ENCODE measurements at regions of chr7 and their contacts with region 1.

Region 1: GRCh38 chr7:954330-955238 is at the start of gene ADAP1:
- DNase-seq: peak in 7 of 9 donors; percentile 41 to 76 (median 56)
- ATAC-seq: peak; percentile 84
- H3K4me3 ChIP-seq: no peak within 1 kb of the TSS
- H3K4me3 Mint-ChIP-seq: peak within 1 kb of the TSS; percentile 51 to 86 (median 65)
- H3K27ac ChIP-seq: no peak within 1 kb of the TSS
- H3K27ac Mint-ChIP-seq: peak within 1 kb of the TSS in 2 of 9 donors; percentile 32 to 33
- H3K4me1 ChIP-seq: no peaks in the 10 kb centered on the region
- H3K4me1 Mint-ChIP-seq: peaks cover 0 to 12% (median 0%) of the 10 kb centered on the region in 7 donors
- H3K27me3 ChIP-seq: no peaks in the 10 kb centered on the region
- H3K27me3 Mint-ChIP-seq: peaks cover 0 to 13% (median 8%) of the 10 kb centered on the region in 5 donors
- total RNA-seq, gene ADAP1: 5.0 to 68.6 (median 17.3) TPM

Region 2: GRCh38 chr7:322111-322671 is 632.4 kb before region 1 on chr7:
- CTCF ChIA-PET with region 1: no interaction called
- POLR2A ChIA-PET with region 1: no interaction called
- intact Hi-C with region 1: loop called in 1 of 2 experiments (anchors 5 kb)
- DNase-seq: peak; percentile 74 to 98 (median 85)
- ATAC-seq: peak; percentile 100
- H3K4me3 ChIP-seq: no peak overlapping the region
- H3K4me3 Mint-ChIP-seq: no peak overlapping the region
- H3K27ac ChIP-seq: no peak overlapping the region
- H3K27ac Mint-ChIP-seq: no peak overlapping the region
- H3K4me1 ChIP-seq: no peaks in the 10 kb centered on the region
- H3K4me1 Mint-ChIP-seq: peaks cover 0 to 6% (median 0%) of the 10 kb centered on the region in 7 donors
- H3K27me3 ChIP-seq: no peaks in the 10 kb centered on the region
- H3K27me3 Mint-ChIP-seq: peaks cover 15 to 36% (median 23%) of the 10 kb centered on the region in 5 donors

Region 3: GRCh38 chr7:774161-775109 is 180.1 kb before region 1 on chr7:
- CTCF ChIA-PET with region 1: no interaction called
- POLR2A ChIA-PET with region 1: no interaction called
- intact Hi-C with region 1: loop called in 1 of 2 experiments (anchors 5 kb)
- DNase-seq: peak; percentile 38 to 79 (median 62)
- ATAC-seq: peak; percentile 84
- H3K4me3 ChIP-seq: no peak overlapping the region
- H3K4me3 Mint-ChIP-seq: no peak overlapping the region
- H3K27ac ChIP-seq: no peak overlapping the region
- H3K27ac Mint-ChIP-seq: no peak overlapping the region
- H3K4me1 ChIP-seq: no peaks in the 10 kb centered on the region
- H3K4me1 Mint-ChIP-seq: no peaks in the 10 kb centered on the region
- H3K27me3 ChIP-seq: no peaks in the 10 kb centered on the region
- H3K27me3 Mint-ChIP-seq: no peaks in the 10 kb centered on the region

Region 4: DNA sequence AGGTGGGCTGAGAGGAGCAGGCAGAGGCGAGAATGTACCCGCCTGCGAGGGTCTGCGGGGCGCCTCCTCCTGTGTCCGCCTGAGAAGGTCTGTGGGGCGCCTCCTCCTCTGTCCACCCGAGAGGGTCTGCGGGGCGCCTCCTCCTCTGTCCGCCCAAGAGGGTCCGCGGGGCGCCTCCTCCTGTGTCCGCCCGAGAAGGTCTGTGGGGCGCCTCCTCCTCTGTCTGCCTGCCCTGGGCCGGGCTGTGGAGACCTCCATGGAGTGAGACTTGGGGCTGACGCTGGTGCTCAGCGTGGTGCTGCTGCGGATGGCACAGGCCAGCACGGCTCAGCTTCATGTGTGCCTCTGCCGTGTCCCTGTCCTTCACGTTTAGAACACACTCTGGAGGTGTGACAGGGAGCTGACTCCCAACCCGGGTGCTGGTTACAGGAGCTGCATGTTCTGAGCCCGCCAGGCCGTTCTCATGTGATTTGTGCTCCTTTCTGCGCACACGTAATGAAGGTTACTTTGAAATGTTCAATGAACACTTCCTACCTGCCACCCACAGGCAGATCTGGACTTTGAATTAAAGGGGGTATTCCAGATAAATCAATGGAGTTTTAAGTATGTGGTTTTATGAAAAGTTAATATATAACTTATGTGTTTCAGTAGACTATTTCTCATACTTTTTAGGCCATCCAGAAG is 98.8 kb before region 1 on chr7:
- CTCF ChIA-PET with region 1: no interaction called
- POLR2A ChIA-PET with region 1: no interaction called
- intact Hi-C with region 1: no loop called
- DNase-seq: no peak
- ATAC-seq: no peak
- H3K4me3 ChIP-seq: no peak overlapping the region
- H3K4me3 Mint-ChIP-seq: no peak overlapping the region
- H3K27ac ChIP-seq: no peak overlapping the region
- H3K27ac Mint-ChIP-seq: peak overlapping the region in 1 of 9 donors; percentile 57
- H3K4me1 ChIP-seq: no peaks in the 10 kb centered on the region
- H3K4me1 Mint-ChIP-seq: peaks cover 0 to 4% (median 0%) of the 10 kb centered on the region in 7 donors
- H3K27me3 ChIP-seq: no peaks in the 10 kb centered on the region
- H3K27me3 Mint-ChIP-seq: no peaks in the 10 kb centered on the region

Region 5: DNA sequence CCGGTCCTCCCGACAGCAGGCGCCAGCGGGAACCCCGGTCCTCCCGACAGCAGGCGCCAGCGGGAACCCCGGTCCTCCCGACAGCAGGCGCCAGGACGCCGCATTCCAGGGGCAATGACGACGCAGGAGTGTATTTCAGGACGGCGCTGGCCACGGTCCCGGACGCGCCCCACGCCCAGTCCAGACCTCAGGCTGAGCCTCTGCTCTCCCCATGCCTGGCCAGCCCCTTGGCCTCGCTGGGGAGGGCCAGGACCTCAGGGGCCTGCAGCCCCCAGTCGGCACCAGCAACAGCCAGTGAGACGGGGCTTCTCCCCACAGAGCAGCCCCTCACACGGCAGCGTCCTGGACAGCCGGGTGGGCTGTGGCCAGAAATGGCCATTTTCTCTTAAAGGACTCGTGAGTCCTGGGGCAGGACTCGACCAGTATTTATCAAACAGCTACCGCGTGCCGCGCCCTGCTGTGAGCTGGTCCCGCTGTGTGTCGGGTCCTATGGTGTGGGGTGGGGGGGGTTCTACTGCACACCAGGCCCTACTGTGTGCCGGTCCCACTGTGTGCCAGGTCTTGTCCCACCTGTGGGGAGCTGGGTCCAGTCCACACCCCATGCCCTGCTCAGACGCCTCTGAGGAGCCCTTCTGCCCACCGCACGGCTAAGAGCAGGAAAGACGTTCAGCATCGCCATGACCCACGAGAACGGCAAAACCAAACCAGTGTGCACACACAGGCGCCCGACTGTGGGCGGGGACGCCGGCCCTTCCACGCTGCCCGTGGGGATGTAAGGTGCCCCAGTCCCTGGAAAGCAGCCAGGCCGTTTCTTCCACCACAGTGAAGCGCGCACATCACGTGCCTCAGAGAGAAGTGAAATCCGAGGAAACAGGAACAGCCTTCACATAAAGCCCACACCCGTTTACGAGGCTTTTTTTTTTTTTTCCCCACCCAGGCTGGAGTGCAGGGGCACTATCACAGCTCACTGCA is 44.9 kb before region 1 on chr7:
- CTCF ChIA-PET with region 1: interaction called, 6 read pairs
- POLR2A ChIA-PET with region 1: interaction called, 3 read pairs
- intact Hi-C with region 1: loop called (anchors 1 kb)
- DNase-seq: peak in 3 of 9 donors; percentile 19 to 37 (median 29)
- ATAC-seq: peak; percentile 63
- H3K4me3 ChIP-seq: peak overlapping the region; percentile 9
- H3K4me3 Mint-ChIP-seq: peak overlapping the region in 9 of 10 donors; percentile 60 to 82 (median 77)
- H3K27ac ChIP-seq: no peak overlapping the region
- H3K27ac Mint-ChIP-seq: peak overlapping the region in 7 of 9 donors; percentile 28 to 80 (median 76)
- H3K4me1 ChIP-seq: peaks cover 0 to 11% of the 10 kb centered on the region in 2 donors
- H3K4me1 Mint-ChIP-seq: peaks cover 0 to 13% (median 10%) of the 10 kb centered on the region in 7 donors
- H3K27me3 ChIP-seq: no peaks in the 10 kb centered on the region
- H3K27me3 Mint-ChIP-seq: peaks cover 0 to 2% (median 0%) of the 10 kb centered on the region in 5 donors

Measured in naive thymus-derived CD4-positive, alpha-beta T cell (primary cell).